Posterior vena cava (tissue), 2 donors: ENCODE measurements at regions of chr17 and their contacts with region 1.

Region 1: GRCh38 chr17:31549525-31550388 is 158.3 kb downstream of the RAB11FIP4 start:
- DNase-seq: peak; percentile 97

Region 2: DNA sequence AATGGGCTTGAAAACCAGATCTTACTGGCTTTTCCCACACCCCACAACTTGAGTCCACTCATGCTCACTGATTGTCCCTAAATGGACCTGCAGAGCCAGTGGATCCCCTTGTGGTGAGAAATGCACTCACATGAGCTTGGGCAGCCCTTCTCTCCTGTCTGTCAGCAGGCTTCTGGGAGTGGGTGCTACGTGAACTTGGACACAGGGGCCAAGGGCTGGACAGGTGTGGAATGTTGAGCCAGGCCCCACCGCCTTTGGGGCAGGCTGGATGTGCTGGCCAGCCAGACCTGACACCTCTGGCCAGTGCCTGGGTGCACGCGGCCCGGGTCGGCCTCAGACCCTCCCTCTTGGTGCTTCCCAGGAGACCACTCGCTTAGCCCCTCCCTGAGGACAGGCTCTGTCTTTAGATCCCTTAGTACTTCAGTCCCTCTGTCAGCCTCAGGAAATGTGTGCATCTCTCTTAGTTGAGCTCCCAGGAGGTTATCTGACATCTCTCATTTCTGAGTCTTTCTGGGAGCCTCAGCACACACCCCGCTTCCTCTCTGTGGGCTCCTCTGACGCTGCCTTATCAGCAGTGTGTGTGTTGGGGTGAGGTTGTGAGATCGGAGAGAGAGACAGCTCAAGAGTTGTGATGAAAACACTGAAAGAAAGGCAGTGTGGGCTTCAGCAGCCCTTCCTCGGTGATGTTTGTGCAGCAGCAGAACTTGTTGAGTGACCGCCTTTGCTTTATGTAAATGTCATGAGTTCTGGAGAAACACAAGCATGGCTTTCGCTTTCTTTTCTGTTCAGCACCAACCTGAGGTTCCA is 41.3 kb before region 1 on chr17:
- intact Hi-C with region 1: no loop called
- DNase-seq: no peak

Region 3: DNA sequence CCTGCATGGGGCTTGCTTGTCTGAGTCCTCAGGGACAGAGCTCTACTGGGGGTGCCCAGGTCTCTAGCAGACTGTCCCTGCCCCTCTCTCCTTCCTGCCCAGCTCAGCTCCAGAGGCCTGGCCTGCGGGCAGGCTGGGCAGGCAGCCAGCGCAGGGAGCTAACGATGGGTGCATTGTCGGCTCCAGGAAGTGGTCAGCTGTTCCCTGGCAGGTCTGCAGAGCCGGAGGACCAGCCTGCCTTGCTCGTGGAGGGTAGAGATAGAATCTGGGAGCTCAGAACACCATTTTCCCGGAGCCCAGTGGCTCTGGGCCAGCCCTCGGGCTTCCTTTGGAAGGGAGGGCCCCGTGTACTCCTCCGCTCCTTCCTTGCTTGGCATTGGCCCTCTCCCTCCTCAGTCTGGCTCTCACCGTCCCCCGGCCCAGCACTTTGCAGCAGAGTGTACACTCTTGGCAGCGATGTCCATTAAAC is 31.3 kb after region 1 on chr17:
- intact Hi-C with region 1: no loop called
- DNase-seq: peak; percentile 92

Region 4: GRCh38 chr17:31660684-31661083 is 110.9 kb after region 1 on chr17:
- intact Hi-C with region 1: loop called in 1 of 2 experiments (anchors 2 kb)
- DNase-seq: no peak

Region 5: GRCh38 chr17:31696184-31696602 is 146.4 kb after region 1 on chr17:
- intact Hi-C with region 1: loop called in 1 of 2 experiments (anchors 10 kb)
- DNase-seq: peak; percentile 92

Region 6: GRCh38 chr17:32103476-32104113 is 553.8 kb after region 1 on chr17:
- intact Hi-C with region 1: no loop called
- DNase-seq: peak; percentile 32

Region 7: DNA sequence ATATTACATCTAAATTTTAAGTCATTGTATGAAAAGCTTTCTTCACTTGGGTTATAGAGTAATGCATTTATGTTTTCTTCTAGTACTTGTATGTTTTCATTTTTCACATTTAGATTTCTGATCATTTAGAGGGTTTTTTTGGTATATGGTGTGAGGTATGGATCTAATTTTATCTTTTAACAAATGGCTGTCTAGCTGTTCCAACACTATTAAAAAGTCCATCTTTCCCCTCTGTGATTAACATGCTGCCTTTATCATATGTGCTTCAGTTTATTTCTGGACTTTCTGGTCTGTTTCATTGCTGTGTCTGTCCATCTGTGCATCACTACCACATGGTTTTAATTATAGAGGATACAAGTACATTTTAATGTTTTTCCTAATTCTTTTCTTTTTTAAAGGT is 1163.3 kb after region 1 on chr17:
- intact Hi-C with region 1: no loop called
- DNase-seq: no peak